ENCODE measurements at regions of chr10 and their contacts with region 1.

Region 1: GRCh38 chr10:58590152-58590840 is 77.6 kb downstream of the BICC1 start:
- DNase-seq: peak; percentile 98
- H3K4me3 ChIP-seq: no peak overlapping the region
- H3K27me3 ChIP-seq: no peaks in the 10 kb centered on the region
- CTCF ChIP-seq: no peak

Region 2: DNA sequence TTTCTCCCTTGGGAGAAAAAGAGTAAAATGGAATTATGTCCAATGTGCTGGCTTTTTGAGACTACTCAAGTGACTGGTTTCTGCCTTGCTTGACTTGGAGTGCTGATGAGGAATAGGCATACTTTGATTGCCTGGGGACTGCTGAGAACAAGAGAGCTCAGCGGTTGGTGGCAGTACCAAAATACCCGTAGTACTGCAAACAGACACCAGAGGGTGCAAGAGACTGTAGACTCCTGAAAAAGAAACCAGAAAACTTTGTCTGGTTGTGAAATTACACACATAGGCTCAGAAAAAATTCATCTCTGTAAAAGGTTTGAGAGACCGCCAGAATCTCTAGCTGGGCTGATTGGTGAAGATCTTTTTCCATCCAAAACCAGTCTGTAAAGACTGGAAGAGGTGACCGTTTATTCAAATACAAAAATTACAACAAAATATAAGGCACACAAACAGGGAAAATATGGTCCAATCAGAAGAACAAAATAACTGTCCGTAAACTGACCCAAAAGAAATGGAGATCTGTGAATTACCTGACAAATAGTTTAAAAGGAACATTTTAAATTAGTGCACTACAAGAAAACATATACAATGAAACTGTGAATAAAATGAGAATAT is 59.1 kb before region 1 on chr10:
- CTCF ChIA-PET with region 1: interaction called, 13 read pairs
- POLR2A ChIA-PET with region 1: no interaction called
- DNase-seq: no peak
- H3K4me3 ChIP-seq: no peak overlapping the region
- H3K27me3 ChIP-seq: no peaks in the 10 kb centered on the region
- CTCF ChIP-seq: peak; percentile 76

Region 3: GRCh38 chr10:58567639-58568038 is 22.7 kb before region 1 on chr10:
- CTCF ChIA-PET with region 1: no interaction called
- POLR2A ChIA-PET with region 1: no interaction called
- DNase-seq: no peak
- H3K4me3 ChIP-seq: no peak overlapping the region
- H3K27me3 ChIP-seq: no peaks in the 10 kb centered on the region
- CTCF ChIP-seq: no peak

Region 4: DNA sequence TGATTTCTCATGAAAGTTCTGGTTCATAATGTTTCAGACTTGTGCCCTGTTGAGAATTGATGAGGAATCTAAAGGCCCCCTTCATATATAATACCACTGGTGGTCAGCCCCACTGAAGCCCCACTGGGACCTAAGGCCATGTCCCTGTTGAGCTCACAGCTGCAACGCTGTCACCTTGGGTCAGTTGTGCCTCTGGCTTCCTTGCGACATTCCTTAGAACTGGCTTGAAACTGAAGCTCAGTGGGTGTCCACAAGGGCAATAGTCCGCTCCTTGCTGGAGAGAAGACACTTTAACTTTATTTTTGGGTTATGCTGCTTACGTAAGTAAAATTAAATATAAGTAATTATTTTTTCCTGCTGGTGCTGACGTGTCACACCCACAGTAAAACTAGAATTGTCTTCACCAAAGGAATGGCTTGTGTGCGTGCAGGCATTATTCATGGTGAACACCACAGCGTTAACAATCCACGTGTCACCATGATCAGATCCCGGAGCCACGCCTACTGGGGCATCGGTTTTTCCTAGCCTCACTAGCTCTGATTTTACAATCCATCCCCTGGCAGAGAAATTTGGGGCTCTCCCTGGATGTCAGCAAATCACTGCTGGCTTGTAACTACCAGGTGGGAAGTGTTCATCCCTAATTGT is 11.2 kb before region 1 on chr10:
- CTCF ChIA-PET with region 1: interaction called, 10 read pairs
- POLR2A ChIA-PET with region 1: no interaction called
- DNase-seq: no peak
- H3K4me3 ChIP-seq: no peak overlapping the region
- H3K27me3 ChIP-seq: no peaks in the 10 kb centered on the region
- CTCF ChIP-seq: no peak